ENCODE measurements at regions of chr16 and their contacts with region 1.

Region 1: GRCh38 chr16:714558-715476 is at the start of gene METRN:
- DNase-seq: peak; percentile 93
- ATAC-seq: peak; percentile 72
- H3K4me3 Mint-ChIP-seq: peak within 1 kb of the TSS; percentile 63
- H3K27ac Mint-ChIP-seq: no peak within 1 kb of the TSS
- H3K4me1 Mint-ChIP-seq: peaks cover 14% of the 10 kb centered on the region
- H3K27me3 Mint-ChIP-seq: peaks cover 40% of the 10 kb centered on the region
- CTCF ChIP-seq: no peak
- total RNA-seq, gene METRN: 30.9 to 64.3 TPM (median 61.4 TPM) in 3 replicates

Region 2: DNA sequence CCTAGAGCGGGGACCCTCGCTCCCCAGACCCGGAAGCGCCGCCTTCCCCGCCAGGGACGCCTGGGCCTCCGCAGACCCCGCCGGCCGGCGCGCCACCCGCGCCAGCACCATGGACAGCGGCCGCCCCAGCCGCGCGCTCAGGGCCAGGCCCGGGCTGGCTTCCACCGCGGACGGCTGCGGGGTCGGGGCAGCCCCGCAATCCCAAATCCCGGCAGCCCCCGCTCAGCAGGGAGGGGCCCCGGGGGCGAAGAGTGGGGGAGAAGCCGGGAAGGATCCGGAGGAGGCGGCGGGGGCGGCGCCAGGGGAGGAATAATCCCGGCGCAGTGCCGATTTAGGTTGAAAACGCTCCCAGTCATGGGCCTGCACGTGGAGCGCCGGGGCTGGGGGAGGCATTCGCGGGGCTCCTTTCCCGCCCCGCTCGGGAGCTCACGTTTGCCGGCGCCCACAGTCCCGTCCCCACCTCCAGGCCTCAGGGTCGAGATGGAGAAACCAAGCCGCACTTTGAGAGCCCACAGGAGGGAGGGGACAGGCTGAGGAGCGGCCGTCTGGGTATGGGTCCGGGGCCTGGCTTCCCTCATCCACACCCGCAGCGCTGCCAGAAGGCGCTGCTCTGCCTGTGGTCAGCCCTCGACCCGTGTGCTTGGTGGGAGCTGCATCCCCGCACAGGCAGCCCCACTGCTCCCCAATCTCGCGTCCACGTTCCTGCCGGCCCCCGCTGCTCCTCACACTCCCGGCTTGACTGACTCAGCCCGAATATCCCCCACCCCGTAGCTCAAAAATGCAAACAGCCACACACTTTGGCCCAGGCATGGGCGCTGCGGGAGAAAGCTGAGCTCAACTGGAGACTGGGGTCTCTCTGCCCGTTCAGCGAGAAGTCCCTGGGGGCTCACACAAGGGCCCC is 13.9 kb before region 1 on chr16:
- CTCF ChIA-PET with region 1: interaction called, 25 read pairs
- POLR2A ChIA-PET with region 1: interaction called, 5 read pairs
- DNase-seq: peak; percentile 76
- ATAC-seq: peak; percentile 72
- H3K4me3 Mint-ChIP-seq: no peak overlapping the region
- H3K27ac Mint-ChIP-seq: no peak overlapping the region
- H3K4me1 Mint-ChIP-seq: no peaks in the 10 kb centered on the region
- H3K27me3 Mint-ChIP-seq: peaks cover 82% of the 10 kb centered on the region
- CTCF ChIP-seq: no peak

Region 3: GRCh38 chr16:728131-728889 is 13.5 kb after region 1 on chr16:
- CTCF ChIA-PET with region 1: interaction called, 90 read pairs
- POLR2A ChIA-PET with region 1: interaction called, 5 read pairs
- DNase-seq: peak; percentile 77
- ATAC-seq: peak; percentile 10
- H3K4me3 Mint-ChIP-seq: peak overlapping the region; percentile 64
- H3K27ac Mint-ChIP-seq: no peak overlapping the region
- H3K4me1 Mint-ChIP-seq: no peaks in the 10 kb centered on the region
- H3K27me3 Mint-ChIP-seq: peaks cover 2% of the 10 kb centered on the region; the same call in 1 of the 2 replicates
- CTCF ChIP-seq: no peak

Region 4: DNA sequence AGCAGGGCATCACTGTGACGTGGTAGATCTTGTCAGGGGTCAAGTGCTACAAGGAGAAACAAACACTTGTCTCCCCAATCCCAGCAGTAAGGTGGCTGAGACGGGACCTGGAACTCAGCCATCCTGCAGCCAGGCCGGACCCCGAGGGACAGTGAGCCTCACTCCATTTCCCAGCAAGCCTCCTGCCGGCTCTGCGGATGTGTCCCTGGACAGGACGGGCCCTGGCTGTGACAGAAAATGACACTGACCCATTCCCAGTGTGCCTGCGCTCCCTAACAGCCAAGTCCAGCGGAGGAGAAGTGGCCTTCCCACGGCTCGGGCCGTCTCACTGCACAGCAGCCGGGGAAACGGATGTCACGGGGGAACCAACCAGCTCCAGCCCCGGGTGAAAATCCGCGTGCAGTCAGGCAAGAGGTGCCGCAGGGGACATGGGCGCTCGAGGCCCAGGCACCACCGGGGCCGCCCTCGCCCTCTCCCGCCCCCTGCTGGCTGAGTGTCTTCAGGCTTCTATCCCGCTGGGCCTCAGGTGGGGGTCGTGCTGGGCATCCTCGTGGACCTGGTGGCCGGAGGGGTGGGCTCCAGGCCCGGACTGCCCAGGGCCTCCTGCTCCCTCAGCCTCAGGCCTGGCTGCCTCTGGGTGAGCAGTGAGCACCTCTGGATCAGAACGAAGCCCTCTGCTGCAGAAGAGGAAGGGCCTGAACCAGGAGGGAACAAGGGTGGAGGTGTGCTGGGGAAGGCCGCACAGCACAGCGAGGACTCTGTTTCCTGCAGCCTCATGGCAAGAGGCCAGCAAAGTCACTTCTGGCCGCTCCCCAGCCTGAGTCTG is 18.8 kb after region 1 on chr16:
- CTCF ChIA-PET with region 1: interaction called, 90 read pairs
- POLR2A ChIA-PET with region 1: interaction called, 3 read pairs
- DNase-seq: peak; percentile 59
- ATAC-seq: no peak; the same call in 1 of the 2 replicates
- H3K4me3 Mint-ChIP-seq: no peak overlapping the region
- H3K27ac Mint-ChIP-seq: no peak overlapping the region
- H3K4me1 Mint-ChIP-seq: peaks cover 9% of the 10 kb centered on the region
- H3K27me3 Mint-ChIP-seq: no peaks in the 10 kb centered on the region
- CTCF ChIP-seq: peak; percentile 19; the same call in 1 of the 2 replicates

Region 5: DNA sequence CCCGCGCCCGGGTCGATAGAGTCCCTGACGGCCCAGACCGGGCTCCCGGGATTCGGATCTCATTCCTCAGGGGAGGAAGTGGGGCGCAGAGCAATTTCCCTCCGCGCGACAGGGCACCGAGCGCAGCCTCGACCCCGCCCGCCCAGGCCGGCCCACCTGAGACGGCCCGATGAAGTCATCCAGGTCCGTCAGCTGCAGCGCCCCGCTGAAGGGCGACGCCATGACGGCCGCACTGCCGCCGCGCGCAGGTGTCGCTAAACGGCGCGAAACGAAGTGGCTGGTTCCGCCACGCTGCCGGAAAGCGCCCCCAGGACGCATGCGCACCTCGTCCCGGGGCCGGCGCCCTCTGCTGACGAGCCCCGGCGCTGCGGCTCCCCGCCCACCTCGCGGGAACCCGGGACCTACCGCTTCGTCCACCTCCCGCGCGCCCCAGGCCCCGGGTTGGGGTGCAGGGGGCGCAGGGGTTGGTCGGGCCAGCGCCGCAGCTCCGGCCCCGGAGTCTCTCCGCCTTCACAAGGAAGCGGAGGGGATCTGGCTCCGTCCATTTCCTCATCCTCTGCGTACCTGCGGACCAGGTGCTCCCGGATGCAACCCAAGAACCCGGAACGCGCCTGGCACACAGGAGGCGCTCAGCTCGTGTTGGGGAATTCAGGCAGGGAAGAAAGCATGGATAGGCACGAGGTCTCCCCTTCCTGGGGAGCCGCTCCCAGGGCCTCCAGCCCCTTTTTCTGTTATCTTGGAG is 26.1 kb after region 1 on chr16 and contains the start of gene CIAO3:
- CTCF ChIA-PET with region 1: interaction called, 27 read pairs
- POLR2A ChIA-PET with region 1: interaction called, 10 read pairs
- DNase-seq: peak; percentile 93
- ATAC-seq: peak; percentile 71
- H3K4me3 Mint-ChIP-seq: peak within 1 kb of the TSS; percentile 79
- H3K27ac Mint-ChIP-seq: peak within 1 kb of the TSS; percentile 78
- H3K4me1 Mint-ChIP-seq: peaks cover 15% of the 10 kb centered on the region
- H3K27me3 Mint-ChIP-seq: no peaks in the 10 kb centered on the region
- CTCF ChIP-seq: peak; percentile 79
- total RNA-seq, gene CIAO3: 32.8 to 50.9 TPM (median 32.8 TPM) in 3 replicates